ENCODE measurements at regions of chr7 and their contacts with region 1.

Region 1: GRCh38 chr7:127347567-127348246 is 44.8 kb downstream of the ZNF800 start:
- DNase-seq: peak; percentile 59 to 74 (median 66)
- H3K4me3 ChIP-seq: no peak overlapping the region
- H3K4me3 Mint-ChIP-seq: peak overlapping the region; percentile 29 to 85 (median 64)
- H3K27ac ChIP-seq: no peak overlapping the region
- H3K27ac Mint-ChIP-seq: peak overlapping the region in 4 of 8 donors; percentile 8 to 72 (median 30)
- H3K4me1 ChIP-seq: no peaks in the 10 kb centered on the region
- H3K4me1 Mint-ChIP-seq: peaks cover 12 to 26% (median 24%) of the 10 kb centered on the region in 3 donors
- H3K27me3 ChIP-seq: no peaks in the 10 kb centered on the region
- H3K27me3 Mint-ChIP-seq: peaks cover 0 to 3% of the 10 kb centered on the region in 2 donors

Region 2: GRCh38 chr7:127137146-127137545 is 210.6 kb before region 1 on chr7:
- CTCF ChIA-PET with region 1: no interaction called
- POLR2A ChIA-PET with region 1: no interaction called
- DNase-seq: no peak
- H3K4me3 ChIP-seq: no peak overlapping the region
- H3K4me3 Mint-ChIP-seq: no peak overlapping the region
- H3K27ac ChIP-seq: no peak overlapping the region
- H3K27ac Mint-ChIP-seq: no peak overlapping the region
- H3K4me1 ChIP-seq: no peaks in the 10 kb centered on the region
- H3K4me1 Mint-ChIP-seq: no peaks in the 10 kb centered on the region
- H3K27me3 ChIP-seq: no peaks in the 10 kb centered on the region
- H3K27me3 Mint-ChIP-seq: peaks cover 0 to 7% of the 10 kb centered on the region in 2 donors

Region 3: DNA sequence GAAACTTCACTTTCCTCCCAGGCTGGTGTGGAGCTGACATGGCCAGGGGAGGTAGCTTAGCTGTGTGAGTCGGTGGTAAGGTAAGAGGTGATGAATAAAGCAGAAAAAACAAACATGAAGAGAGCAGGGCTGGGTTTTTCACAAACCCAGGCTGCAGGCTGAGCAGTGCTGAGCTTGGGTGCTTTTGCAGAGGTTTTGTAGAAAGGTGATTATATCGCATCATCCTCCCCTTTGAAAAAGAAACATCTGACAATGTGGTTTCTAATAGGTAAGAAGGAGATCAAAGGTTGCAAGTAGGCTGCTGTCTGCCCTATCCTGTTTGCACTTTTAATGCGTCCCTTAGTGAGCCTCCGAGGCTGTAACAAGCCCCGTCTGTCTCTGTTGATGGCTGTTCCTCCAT is 25.4 kb before region 1 on chr7:
- CTCF ChIA-PET with region 1: interaction called, 18 read pairs
- POLR2A ChIA-PET with region 1: no interaction called
- DNase-seq: peak in 2 of 5 donors; percentile 16 to 44
- H3K4me3 ChIP-seq: no peak overlapping the region
- H3K4me3 Mint-ChIP-seq: peak overlapping the region in 5 of 7 donors; percentile 7 to 60 (median 28)
- H3K27ac ChIP-seq: no peak overlapping the region
- H3K27ac Mint-ChIP-seq: peak overlapping the region in 7 of 8 donors; percentile 5 to 84 (median 58)
- H3K4me1 ChIP-seq: no peaks in the 10 kb centered on the region
- H3K4me1 Mint-ChIP-seq: peaks cover 18 to 24% (median 23%) of the 10 kb centered on the region in 3 donors
- H3K27me3 ChIP-seq: no peaks in the 10 kb centered on the region
- H3K27me3 Mint-ChIP-seq: peaks cover 0 to 4% of the 10 kb centered on the region in 2 donors

Region 4: GRCh38 chr7:127392566-127393367 is 45.1 kb after region 1 on chr7 and contains the start of gene ZNF800:
- CTCF ChIA-PET with region 1: interaction called, 25 read pairs
- POLR2A ChIA-PET with region 1: interaction called, 22 read pairs
- DNase-seq: peak; percentile 78 to 91 (median 87)
- H3K4me3 ChIP-seq: peak within 1 kb of the TSS; percentile 95
- H3K4me3 Mint-ChIP-seq: peak within 1 kb of the TSS; percentile 92 to 100 (median 98)
- H3K27ac ChIP-seq: peak within 1 kb of the TSS; percentile 99
- H3K27ac Mint-ChIP-seq: peak within 1 kb of the TSS; percentile 92 to 100 (median 99)
- H3K4me1 ChIP-seq: peaks cover 44% of the 10 kb centered on the region
- H3K4me1 Mint-ChIP-seq: peaks cover 51 to 59% (median 56%) of the 10 kb centered on the region in 3 donors
- H3K27me3 ChIP-seq: no peaks in the 10 kb centered on the region
- H3K27me3 Mint-ChIP-seq: peaks cover 0 to 8% of the 10 kb centered on the region in 2 donors
- total RNA-seq, gene ZNF800: 43.8 TPM

Measured in CD8-positive, alpha-beta memory T cell (primary cell).